AG04449 (cell line): ENCODE measurements at regions of chr11 and their contacts with region 1.

Region 1: DNA sequence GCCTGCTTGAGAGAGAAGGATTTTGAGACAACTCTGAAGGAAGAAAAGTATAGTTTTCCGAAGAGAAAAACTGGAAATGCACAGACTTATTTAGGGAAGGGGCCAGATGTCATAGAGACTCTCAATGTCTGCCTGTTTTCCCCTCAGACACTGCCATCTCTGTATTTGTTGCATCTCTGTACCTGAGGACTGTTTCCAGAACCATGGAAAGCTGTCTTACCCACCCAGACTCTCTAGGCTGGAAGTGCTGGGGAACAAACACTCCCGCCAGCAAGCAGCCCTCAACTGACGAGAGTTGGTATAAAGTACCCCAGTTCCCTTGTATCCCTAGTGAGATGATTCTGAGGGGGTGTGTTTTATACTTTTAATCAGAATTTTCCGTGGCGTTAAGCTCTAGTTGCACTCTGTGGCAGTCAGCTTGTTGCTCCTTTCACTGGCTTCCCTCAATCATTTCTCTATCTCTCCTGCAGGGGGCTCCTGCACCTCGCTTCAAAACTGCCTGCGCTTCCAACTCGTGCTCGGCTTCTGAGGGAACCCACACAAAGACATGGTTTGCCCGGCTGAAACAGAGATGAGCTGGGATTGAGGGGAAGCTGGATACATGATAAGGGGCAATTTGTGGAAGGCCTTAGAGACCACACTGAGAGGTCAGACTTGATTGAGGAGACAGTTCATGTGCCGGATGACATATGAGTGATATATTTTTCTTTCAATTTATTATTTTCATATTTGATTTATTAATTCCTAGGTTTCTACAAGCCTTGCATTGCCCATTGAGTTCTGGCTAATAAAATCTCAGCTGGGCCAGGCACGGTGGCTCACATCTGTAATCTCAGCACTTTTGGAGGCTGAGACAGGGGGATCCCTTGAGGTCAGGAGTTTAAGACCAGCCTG is 36.9 kb upstream of the CLPB start:
- DNase-seq: no peak
- H3K4me3 ChIP-seq: no peak overlapping the region
- CTCF ChIP-seq: peak; percentile 82

Region 2: DNA sequence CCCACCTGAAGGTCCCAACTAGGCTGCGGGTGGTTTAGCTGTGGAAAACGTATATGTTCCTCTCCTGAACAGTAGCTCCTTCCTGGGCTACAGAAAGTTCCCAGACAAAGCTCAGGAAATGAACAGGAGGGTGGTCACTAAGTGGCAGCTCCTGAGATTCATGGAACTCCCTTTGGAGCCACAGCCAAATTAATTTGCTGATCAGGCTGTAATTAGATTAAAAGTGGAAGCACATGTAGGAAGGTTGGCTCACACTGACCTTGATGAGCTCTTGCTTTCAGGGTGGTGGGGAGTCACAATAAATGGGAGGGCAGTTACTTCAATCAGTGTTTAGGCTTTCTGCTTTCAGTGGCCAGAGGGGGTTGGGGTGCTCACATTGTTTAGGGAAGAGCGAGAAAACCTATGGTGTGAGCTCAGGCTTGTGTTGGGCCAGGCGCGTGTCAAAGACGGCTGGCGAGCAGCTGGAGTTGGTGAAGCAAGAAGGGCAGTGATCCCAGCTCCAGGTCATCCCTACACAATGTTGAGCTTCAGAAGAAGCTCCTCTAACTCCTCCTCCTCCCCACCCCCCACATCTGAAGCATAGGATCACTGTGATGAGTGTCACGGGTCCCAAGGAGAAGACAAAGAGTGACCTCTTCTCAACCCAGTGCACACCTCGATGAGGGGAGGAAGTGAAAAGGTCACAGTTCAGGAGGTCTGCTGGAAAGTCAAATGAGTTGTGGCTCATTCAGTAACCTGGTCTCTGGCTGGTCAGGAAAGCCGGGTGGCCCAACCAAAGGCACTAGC is 79.4 kb before region 1 on chr11:
- CTCF ChIA-PET with region 1: no interaction called
- POLR2A ChIA-PET with region 1: no interaction called
- DNase-seq: no peak
- H3K4me3 ChIP-seq: no peak overlapping the region
- CTCF ChIP-seq: no peak

Region 3: DNA sequence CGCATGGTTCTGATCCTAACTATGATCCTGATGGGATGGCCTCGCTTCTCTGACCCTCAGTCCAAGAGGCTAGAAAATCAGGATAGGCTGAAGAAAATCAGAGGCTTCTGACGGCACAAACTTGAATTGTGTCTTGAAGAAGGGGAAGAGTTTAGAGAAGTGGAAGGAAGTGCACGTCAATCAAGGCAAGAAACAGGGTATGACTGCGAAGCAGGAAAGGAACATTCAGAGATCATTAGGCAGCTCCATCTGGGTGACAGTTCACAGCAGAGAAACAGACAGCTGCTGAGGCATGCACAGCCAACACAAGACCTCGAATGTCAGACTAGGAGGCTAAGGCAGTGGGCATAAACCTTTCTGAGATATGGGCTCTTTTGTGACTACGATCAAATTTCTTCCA is 66.2 kb before region 1 on chr11:
- CTCF ChIA-PET with region 1: no interaction called
- POLR2A ChIA-PET with region 1: no interaction called
- DNase-seq: no peak
- H3K4me3 ChIP-seq: no peak overlapping the region
- CTCF ChIP-seq: no peak

Region 4: GRCh38 chr11:72446902-72447769 is 24.1 kb before region 1 on chr11:
- CTCF ChIA-PET with region 1: interaction called, 50 read pairs
- POLR2A ChIA-PET with region 1: no interaction called
- DNase-seq: no peak
- H3K4me3 ChIP-seq: no peak overlapping the region
- CTCF ChIP-seq: peak; percentile 56

Region 5: GRCh38 chr11:72483412-72484186 is 12.3 kb after region 1 on chr11:
- CTCF ChIA-PET with region 1: interaction called, 27 read pairs
- POLR2A ChIA-PET with region 1: no interaction called
- DNase-seq: no peak
- H3K4me3 ChIP-seq: no peak overlapping the region
- CTCF ChIP-seq: no peak

Region 6: DNA sequence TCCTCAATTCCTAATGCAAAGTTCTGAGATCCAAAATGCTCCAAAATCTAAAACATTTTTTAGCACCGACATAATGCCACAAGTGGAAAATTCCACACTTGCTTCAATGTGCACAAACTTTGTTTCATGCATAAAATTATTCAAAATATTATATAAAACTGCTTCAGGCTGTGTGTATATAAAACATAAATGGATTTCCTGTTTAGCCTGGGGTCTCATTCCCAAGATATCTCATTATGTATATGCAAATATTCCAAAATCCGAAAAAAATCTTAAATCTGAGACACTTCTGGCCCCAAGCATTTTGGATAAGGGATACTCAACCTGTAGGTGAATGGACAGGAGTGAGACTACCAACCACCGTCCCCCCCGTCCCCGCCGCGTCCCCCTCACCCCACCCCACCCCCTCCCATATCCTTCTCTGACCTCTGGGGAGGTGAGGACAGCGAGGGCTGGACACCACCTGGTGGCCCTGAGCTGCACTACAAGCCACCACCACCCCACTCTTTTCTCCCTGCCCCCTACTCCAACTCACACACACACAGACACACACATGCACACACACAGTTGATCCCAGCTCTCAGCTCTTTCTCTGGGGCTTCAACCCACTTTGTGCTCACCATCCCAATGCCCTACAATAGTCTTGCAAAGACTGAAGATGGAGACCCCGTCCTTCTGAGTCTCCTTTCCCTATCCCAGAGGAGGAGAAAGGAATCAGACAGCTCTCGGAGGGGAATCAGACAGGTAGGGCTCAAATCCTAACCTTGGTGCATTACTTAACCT is 102.0 kb after region 1 on chr11:
- CTCF ChIA-PET with region 1: interaction called, 56 read pairs
- POLR2A ChIA-PET with region 1: no interaction called
- DNase-seq: no peak
- H3K4me3 ChIP-seq: no peak overlapping the region
- CTCF ChIP-seq: peak; percentile 77

Region 7: DNA sequence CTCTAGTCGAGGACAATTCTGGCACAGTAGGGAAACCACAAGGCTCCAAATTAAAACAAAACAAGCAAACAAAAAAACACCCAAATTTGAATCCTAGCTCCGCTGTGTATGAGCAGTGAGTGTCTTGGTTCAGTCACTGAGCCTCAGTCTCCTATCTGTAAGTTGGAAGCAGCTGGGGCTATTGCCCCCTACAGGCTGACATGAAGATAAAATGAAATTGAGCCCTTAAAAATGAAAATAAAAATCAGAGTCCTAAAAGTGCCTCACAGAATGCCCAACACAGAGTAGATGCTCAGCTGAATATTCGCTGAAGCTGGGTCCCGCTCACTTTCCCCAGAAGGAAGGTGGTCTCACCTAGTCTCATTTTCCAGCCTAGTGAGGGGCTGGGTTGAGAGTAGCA is 137.8 kb after region 1 on chr11:
- CTCF ChIA-PET with region 1: interaction called, 23 read pairs
- POLR2A ChIA-PET with region 1: no interaction called
- DNase-seq: no peak
- H3K4me3 ChIP-seq: no peak overlapping the region
- CTCF ChIP-seq: peak; percentile 25

Region 8: GRCh38 chr11:72652873-72653630 is 181.8 kb after region 1 on chr11:
- CTCF ChIA-PET with region 1: interaction called, 13 read pairs
- POLR2A ChIA-PET with region 1: no interaction called
- DNase-seq: no peak
- H3K4me3 ChIP-seq: no peak overlapping the region
- CTCF ChIP-seq: no peak

Region 9: DNA sequence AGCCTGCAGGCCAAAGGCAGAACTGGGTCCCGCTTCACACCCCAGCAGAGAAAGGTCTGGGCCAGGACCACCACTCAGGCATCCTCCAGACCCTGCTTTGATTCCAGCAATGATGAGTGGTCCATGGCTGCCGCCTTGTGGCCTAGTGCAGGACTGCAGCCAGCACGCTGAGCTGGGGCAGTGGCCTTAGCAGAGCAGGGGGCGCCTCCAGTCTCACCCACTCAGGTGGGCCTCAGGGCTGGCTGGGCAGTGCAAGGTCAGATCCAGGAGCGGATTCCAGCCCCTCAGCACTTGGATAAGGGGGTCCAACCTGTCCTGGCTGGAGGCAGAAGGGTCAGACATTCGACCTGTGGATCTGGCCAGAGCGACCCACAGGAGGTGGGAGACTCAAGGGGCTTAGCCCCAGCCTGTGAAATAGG is 212.5 kb after region 1 on chr11:
- CTCF ChIA-PET with region 1: interaction called, 113 read pairs
- POLR2A ChIA-PET with region 1: no interaction called
- DNase-seq: no peak
- H3K4me3 ChIP-seq: no peak overlapping the region
- CTCF ChIP-seq: peak; percentile 93